Sigmoid colon (tissue), 7 donors: ENCODE measurements at regions of chr13 and their contacts with region 1.

Region 1: DNA sequence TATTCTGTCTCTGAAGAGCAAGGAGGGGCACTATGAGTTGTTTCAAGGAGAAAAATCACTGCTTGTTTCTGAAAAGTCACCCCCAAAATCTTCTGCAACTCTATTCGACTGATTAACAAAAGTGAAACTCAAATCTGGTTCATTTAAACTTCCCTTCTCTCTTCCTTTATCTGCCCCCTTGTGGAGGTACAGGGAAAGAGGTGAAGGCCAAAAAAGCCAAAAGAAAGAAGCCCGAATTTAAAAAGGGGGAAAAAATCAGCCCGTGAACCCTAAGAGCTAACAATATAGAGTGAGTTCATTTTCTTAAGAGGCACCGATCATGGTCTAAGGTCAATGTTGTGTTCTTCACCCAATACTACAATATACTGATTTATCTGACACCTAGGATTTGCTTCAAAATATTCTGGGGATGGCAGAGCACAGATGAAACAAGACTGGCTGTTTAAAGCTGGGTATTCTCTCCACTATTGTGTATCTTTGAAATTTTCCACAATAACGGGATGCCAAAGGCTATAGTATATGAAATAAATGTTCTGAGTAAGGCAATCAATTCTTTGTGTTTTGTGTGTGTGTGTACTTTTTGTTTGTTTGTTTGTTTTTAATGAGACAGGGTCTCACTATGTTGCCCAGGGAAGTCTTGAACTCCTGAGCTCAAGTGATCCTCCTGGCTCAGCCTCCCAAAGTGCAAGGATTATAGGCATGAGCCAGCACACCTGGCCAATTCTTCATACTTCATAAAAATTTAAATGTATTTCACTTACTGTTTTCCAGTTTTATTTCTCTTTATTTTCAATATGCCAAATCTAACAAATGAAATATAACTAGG is 55.0 kb upstream of the EEF1AKMT1 start:
- DNase-seq: no peak
- H3K4me3 ChIP-seq: peak overlapping the region in 3 of 4 donors; percentile 16 to 30 (median 23)
- H3K27ac ChIP-seq: peak overlapping the region; percentile 44 to 55 (median 47)
- H3K4me1 ChIP-seq: peaks cover 0 to 65% (median 35%) of the 10 kb centered on the region in 4 donors
- H3K27me3 ChIP-seq: no peaks in the 10 kb centered on the region
- CTCF ChIP-seq: peak; percentile 49 to 82 (median 79)
- EP300 ChIP-seq: no peak
- POLR2A ChIP-seq: no peak

Region 2: DNA sequence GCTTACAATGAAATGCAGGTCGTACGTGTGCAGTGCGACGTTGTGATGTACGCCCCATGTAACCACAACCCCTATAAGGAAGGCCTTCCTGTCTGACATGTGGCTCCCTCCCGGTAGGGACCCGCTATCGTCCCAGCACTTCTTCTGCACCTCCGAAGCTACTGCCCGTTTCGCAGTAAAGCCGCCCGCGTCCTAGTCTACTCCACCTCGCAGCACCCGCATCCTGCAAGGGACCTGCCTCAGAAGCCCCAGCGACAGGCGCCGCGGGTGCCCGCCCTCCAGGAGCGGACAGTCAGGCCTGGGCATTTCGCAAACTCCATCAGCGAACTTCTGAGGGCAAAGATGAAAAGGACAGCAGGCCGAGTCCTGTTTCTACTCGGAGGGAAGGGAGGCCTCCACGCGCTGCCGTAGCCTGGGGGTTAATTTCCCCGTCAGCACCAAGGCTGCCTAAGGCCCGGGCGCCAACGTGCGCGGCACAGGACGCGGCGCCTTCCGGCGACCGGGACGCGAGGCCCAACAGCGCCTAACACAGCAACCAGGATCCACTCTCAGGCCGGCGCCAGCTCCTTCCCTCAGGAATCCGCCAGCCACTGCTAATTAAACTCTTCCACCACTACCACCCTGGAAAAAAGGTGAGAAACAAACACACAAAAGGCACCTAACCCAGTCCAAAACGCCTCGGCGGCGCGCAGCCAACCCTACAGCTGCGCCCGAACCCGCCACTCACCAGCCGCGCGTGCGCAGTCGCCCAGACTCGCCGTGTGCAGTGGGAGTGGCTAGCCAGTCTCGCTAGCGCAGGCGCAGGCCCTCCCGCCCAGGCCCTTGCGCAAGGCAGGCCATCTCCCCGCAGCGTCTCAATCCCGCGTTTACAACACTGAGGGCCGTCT is 55.3 kb before region 1 on chr13 and contains the start of gene EEF1AKMT1:
- intact Hi-C with region 1: loop called (anchors 5 kb)
- DNase-seq: peak; percentile 97
- H3K4me3 ChIP-seq: peak within 1 kb of the TSS; percentile 51 to 63 (median 60)
- H3K27ac ChIP-seq: peak within 1 kb of the TSS; percentile 81 to 95 (median 85)
- H3K4me1 ChIP-seq: peaks cover 0 to 15% (median 9%) of the 10 kb centered on the region in 4 donors
- H3K27me3 ChIP-seq: no peaks in the 10 kb centered on the region
- CTCF ChIP-seq: no peak
- EP300 ChIP-seq: no peak
- POLR2A ChIP-seq: peak; percentile 89 to 92
- total RNA-seq, gene EEF1AKMT1: 10.0 to 17.8 (median 12.1) TPM

Region 3: DNA sequence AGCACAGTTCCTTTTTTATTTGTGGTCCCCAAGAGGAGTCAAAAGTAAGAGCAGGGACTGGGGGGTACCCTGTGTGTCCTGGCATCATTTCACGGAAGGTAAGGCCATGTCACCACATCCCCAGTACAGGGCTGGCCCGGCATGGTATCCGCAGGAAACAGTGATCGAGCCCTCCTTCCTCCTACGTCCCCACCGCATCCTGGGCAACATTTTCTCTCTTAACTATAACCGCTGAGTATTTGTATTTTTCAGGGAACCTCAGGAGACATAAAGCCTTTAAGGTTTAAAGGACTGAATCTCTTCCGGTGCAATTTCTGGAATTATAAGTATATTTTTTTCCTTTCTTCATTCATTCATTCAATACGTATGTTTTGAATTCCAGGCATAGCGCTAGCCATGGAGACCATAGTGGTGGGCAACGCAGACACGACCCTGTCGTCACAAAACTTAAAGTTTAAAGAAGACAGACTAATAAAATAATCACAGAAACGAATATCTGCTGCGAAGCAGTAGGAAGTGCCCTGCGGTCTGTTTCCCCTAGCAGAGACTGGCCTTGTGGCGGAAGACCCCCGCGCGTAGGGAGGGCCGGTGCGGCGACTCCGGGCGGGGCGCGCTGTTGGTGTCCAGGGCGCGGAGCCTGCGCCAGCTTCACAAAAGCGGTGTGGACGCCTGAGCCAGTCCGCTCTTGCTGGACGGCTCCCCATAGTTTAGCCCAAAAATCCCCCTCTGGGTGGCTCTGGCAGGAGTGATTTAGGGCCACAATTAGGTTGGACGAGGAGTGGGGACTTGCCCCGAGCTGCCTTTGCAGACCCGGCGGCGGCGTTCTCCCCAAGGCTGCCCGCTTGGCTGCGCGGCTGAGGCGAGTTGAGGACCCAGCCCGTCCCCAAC is 246.5 kb after region 1 on chr13:
- intact Hi-C with region 1: no loop called
- DNase-seq: peak; percentile 73
- H3K4me3 ChIP-seq: peak overlapping the region; percentile 42 to 66 (median 52)
- H3K27ac ChIP-seq: peak overlapping the region; percentile 61 to 71 (median 64)
- H3K4me1 ChIP-seq: peaks cover 0 to 32% (median 10%) of the 10 kb centered on the region in 4 donors
- H3K27me3 ChIP-seq: no peaks in the 10 kb centered on the region
- CTCF ChIP-seq: no peak
- EP300 ChIP-seq: no peak
- POLR2A ChIP-seq: no peak